ENCODE measurements at regions of chr18 and their contacts with region 1.

Region 1: DNA sequence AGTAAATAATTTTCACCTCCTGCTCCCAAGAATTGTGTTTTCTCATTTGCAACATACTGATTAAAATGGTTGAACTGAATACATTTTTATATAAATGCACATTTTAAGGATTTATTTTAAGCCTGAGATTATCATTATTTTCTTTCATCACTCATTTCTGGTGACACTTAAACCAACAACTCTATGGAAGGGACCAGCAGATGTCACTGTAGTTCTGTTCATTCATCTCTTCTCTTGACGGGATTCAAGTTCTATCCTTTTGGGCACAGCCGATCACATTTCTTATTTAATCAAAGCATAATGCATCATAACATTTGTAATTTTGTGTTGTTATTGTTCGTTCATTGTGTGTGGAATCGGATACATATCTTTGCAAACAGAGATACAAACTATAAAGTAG is 417.9 kb downstream of the HRH4 start:
- DNase-seq: peak; percentile 64
- ATAC-seq: peak; percentile 72
- H3K4me3 ChIP-seq: no peak overlapping the region
- H3K27ac ChIP-seq: no peak overlapping the region
- H3K4me1 ChIP-seq: peaks cover 8% of the 10 kb centered on the region
- H3K27me3 ChIP-seq: no peaks in the 10 kb centered on the region
- CTCF ChIP-seq: peak; percentile 71
- POLR2A ChIP-seq: no peak
- RAD21 ChIP-seq: peak; percentile 82

Region 2: DNA sequence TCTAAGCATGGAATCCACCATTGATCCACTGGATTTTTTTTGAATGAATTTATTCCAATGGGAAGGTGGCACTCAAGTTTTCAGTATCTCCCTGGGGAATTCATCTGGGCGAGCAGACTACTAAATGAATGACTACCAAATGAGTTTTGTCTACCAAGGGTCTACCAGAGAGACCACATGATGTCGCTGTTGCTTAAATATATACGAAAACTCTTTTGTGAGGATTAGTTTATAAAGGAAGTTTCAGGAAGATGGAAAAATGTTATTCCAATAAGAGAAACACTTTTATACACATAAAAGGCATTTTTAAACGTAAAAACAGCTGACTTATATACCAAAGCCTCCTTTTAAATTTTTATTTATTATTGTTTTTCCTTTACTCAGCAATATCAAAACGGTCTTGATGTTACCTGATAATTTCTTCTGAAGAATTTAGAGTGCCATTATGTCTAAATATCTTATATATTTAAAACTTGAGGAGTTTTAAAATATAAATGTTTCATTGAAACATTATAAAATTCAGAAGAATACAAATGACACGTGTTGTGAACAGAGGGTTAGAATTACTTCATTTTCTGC is 278.1 kb before region 1 on chr18:
- CTCF ChIA-PET with region 1: no interaction called
- POLR2A ChIA-PET with region 1: no interaction called
- dilution Hi-C with region 1: no loop called
- in situ Hi-C with region 1: no loop called
- intact Hi-C with region 1: loop called (anchors 2 kb)
- DNase-seq: peak; percentile 75
- ATAC-seq: peak; percentile 79
- H3K4me3 ChIP-seq: no peak overlapping the region
- H3K27ac ChIP-seq: no peak overlapping the region
- H3K4me1 ChIP-seq: peaks cover 2% of the 10 kb centered on the region; the same call in 1 of the 2 replicates
- H3K27me3 ChIP-seq: peaks cover 24% of the 10 kb centered on the region
- CTCF ChIP-seq: peak; percentile 83
- POLR2A ChIP-seq: no peak
- RAD21 ChIP-seq: peak; percentile 83

Region 3: DNA sequence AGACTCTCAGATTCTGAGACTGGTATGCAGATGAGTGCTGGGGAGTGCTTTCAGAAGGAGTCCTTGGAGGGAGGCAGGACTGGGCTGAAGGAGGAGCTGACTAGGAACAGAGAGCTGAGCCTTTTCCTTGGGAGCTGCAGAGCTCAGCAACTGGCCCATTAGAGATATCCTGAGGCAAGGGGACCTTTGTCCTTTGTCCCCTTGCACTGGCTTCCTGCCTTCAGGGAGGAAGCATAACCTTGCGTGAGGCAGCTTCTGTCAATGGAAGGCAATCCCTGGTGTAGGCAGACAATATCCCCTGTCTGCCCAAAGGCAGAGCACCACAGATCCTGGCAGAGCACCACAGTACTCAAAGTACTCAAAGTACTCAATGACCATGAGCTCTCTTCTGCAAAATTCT is 42.5 kb before region 1 on chr18:
- CTCF ChIA-PET with region 1: no interaction called
- POLR2A ChIA-PET with region 1: no interaction called
- dilution Hi-C with region 1: no loop called
- in situ Hi-C with region 1: no loop called
- intact Hi-C with region 1: no loop called
- DNase-seq: no peak
- ATAC-seq: no peak
- H3K4me3 ChIP-seq: no peak overlapping the region
- H3K27ac ChIP-seq: no peak overlapping the region
- H3K4me1 ChIP-seq: peaks cover 18% of the 10 kb centered on the region; the same call in 1 of the 2 replicates
- H3K27me3 ChIP-seq: peaks cover 5% of the 10 kb centered on the region; the same call in 1 of the 2 replicates
- CTCF ChIP-seq: no peak
- POLR2A ChIP-seq: no peak
- RAD21 ChIP-seq: no peak

Region 4: DNA sequence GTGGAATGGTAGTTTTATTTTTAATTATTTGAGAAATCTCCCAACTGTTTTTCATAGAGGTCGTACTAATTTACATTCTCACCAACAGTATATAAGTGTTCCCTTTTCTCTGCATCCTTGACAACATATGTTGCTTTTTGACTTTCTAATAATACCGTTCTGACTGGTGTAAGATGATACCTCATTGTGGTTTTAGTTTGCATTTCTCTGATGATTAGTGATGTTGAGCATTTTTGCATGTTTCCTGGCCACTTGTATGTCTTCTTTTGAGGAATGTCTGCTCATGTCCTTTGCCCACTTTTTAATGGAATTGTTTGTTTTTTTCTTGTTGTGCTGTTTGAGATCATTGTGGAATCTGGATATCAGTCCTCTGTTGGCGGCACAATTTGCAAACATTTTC is 231.2 kb after region 1 on chr18:
- CTCF ChIA-PET with region 1: no interaction called
- POLR2A ChIA-PET with region 1: no interaction called
- dilution Hi-C with region 1: no loop called
- in situ Hi-C with region 1: no loop called
- intact Hi-C with region 1: no loop called
- DNase-seq: peak; percentile 63
- ATAC-seq: peak; percentile 59
- H3K4me3 ChIP-seq: no peak overlapping the region
- H3K27ac ChIP-seq: no peak overlapping the region
- H3K4me1 ChIP-seq: peaks cover 15% of the 10 kb centered on the region
- H3K27me3 ChIP-seq: no peaks in the 10 kb centered on the region
- CTCF ChIP-seq: no peak
- POLR2A ChIP-seq: no peak
- RAD21 ChIP-seq: no peak

Region 5: GRCh38 chr18:25503567-25504081 is 625.3 kb after region 1 on chr18:
- CTCF ChIA-PET with region 1: no interaction called
- POLR2A ChIA-PET with region 1: no interaction called
- dilution Hi-C with region 1: no loop called
- in situ Hi-C with region 1: no loop called
- intact Hi-C with region 1: loop called (anchors 10 kb)
- DNase-seq: peak; percentile 87
- ATAC-seq: peak; percentile 99
- H3K4me3 ChIP-seq: peak overlapping the region; percentile 42
- H3K27ac ChIP-seq: peak overlapping the region; percentile 72
- H3K4me1 ChIP-seq: no peaks in the 10 kb centered on the region
- H3K27me3 ChIP-seq: peaks cover 3% of the 10 kb centered on the region; the same call in 1 of the 2 replicates
- CTCF ChIP-seq: no peak
- POLR2A ChIP-seq: no peak
- RAD21 ChIP-seq: peak; percentile 17; the same call in 1 of the 2 replicates

Region 6: GRCh38 chr18:25832001-25832604 is 953.8 kb after region 1 on chr18:
- CTCF ChIA-PET with region 1: no interaction called
- POLR2A ChIA-PET with region 1: no interaction called
- dilution Hi-C with region 1: no loop called
- in situ Hi-C with region 1: no loop called
- intact Hi-C with region 1: loop called (anchors 1 kb)
- DNase-seq: peak; percentile 61
- ATAC-seq: peak; percentile 87
- H3K4me3 ChIP-seq: no peak overlapping the region
- H3K27ac ChIP-seq: no peak overlapping the region
- H3K4me1 ChIP-seq: peaks cover 9% of the 10 kb centered on the region
- H3K27me3 ChIP-seq: peaks cover 5% of the 10 kb centered on the region; the same call in 1 of the 2 replicates
- CTCF ChIP-seq: peak; percentile 84
- POLR2A ChIP-seq: no peak
- RAD21 ChIP-seq: peak; percentile 88

Region 7: GRCh38 chr18:25896178-25896780 is 1018.0 kb after region 1 on chr18:
- CTCF ChIA-PET with region 1: no interaction called
- POLR2A ChIA-PET with region 1: no interaction called
- dilution Hi-C with region 1: no loop called
- in situ Hi-C with region 1: loop called (anchors 10 kb)
- intact Hi-C with region 1: loop called (anchors 2 kb)
- DNase-seq: peak; percentile 58
- ATAC-seq: peak; percentile 87
- H3K4me3 ChIP-seq: no peak overlapping the region
- H3K27ac ChIP-seq: no peak overlapping the region
- H3K4me1 ChIP-seq: no peaks in the 10 kb centered on the region
- H3K27me3 ChIP-seq: peaks cover 6% of the 10 kb centered on the region
- CTCF ChIP-seq: peak; percentile 83
- POLR2A ChIP-seq: no peak
- RAD21 ChIP-seq: peak; percentile 87

Region 8: GRCh38 chr18:26307189-26307773 is 1429.0 kb after region 1 on chr18:
- CTCF ChIA-PET with region 1: no interaction called
- POLR2A ChIA-PET with region 1: interaction called, 16 read pairs
- dilution Hi-C with region 1: no loop called
- in situ Hi-C with region 1: no loop called
- intact Hi-C with region 1: no loop called
- DNase-seq: peak; percentile 63
- ATAC-seq: peak; percentile 90
- H3K4me3 ChIP-seq: no peak overlapping the region
- H3K27ac ChIP-seq: no peak overlapping the region
- H3K4me1 ChIP-seq: no peaks in the 10 kb centered on the region
- H3K27me3 ChIP-seq: no peaks in the 10 kb centered on the region
- CTCF ChIP-seq: peak; percentile 79
- POLR2A ChIP-seq: no peak
- RAD21 ChIP-seq: peak; percentile 79

Measured in IMR-90 (cell line).